PC-3 (cell line): ENCODE measurements at regions of chr12 and their contacts with region 1.

Region 1: DNA sequence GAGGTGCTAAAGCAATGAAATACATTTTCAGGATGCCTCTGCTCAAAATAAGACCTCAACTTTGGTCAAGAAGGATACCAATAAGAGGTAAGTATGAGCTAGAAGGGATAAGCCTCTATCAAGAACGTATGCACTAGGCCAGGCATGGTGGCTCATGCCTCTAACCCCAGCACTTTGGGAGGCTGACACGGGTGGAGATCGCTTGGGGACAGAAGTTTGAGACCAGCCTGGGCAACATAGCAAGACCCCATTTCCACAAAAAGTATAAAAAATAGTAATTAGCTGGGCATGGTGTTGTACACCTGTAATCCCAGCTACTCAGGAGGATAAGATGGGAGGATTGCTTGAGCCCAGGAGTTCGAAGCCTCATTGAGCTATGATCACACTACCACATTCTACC is 94.7 kb downstream of the PRKAB1 start:
- DNase-seq: no peak
- ATAC-seq: no peak
- H3K4me3 ChIP-seq: no peak overlapping the region
- H3K27ac ChIP-seq: no peak overlapping the region
- H3K4me1 ChIP-seq: no peaks in the 10 kb centered on the region
- H3K27me3 ChIP-seq: no peaks in the 10 kb centered on the region
- CTCF ChIP-seq: no peak

Region 2: GRCh38 chr12:119742700-119743099 is 19.9 kb before region 1 on chr12:
- CTCF ChIA-PET with region 1: no interaction called
- POLR2A ChIA-PET with region 1: interaction called, 12 read pairs
- intact Hi-C with region 1: no loop called
- DNase-seq: no peak
- ATAC-seq: no peak
- H3K4me3 ChIP-seq: no peak overlapping the region
- H3K27ac ChIP-seq: no peak overlapping the region
- H3K4me1 ChIP-seq: no peaks in the 10 kb centered on the region
- H3K27me3 ChIP-seq: no peaks in the 10 kb centered on the region
- CTCF ChIP-seq: no peak